Activated CD4-positive, alpha-beta memory T cell treated with anti-CD3 and anti-CD28 coated beads for 36 hours (primary cell): ENCODE measurements at regions of chr17 and their contacts with region 1.

Region 1: GRCh38 chr17:37643118-37643766 is at the start of gene DDX52:
- DNase-seq: peak; percentile 93
- H3K4me3 Mint-ChIP-seq: peak within 1 kb of the TSS; percentile 92
- H3K27ac Mint-ChIP-seq: peak within 1 kb of the TSS; percentile 78
- H3K4me1 Mint-ChIP-seq: peaks cover 23% of the 10 kb centered on the region
- H3K27me3 Mint-ChIP-seq: peaks cover 18% of the 10 kb centered on the region
- total RNA-seq, gene DDX52: 24.9 to 26.2 TPM

Region 2: GRCh38 chr17:37541880-37542660 is 101.2 kb before region 1 on chr17:
- CTCF ChIA-PET with region 1: no interaction called
- POLR2A ChIA-PET with region 1: no interaction called
- intact Hi-C with region 1: loop called (anchors 10 kb)
- DNase-seq: no peak
- H3K4me3 Mint-ChIP-seq: no peak overlapping the region
- H3K27ac Mint-ChIP-seq: peak overlapping the region; percentile 77
- H3K4me1 Mint-ChIP-seq: peaks cover 24% of the 10 kb centered on the region
- H3K27me3 Mint-ChIP-seq: no peaks in the 10 kb centered on the region

Region 3: GRCh38 chr17:37585066-37585465 is 58.2 kb before region 1 on chr17:
- CTCF ChIA-PET with region 1: no interaction called
- POLR2A ChIA-PET with region 1: no interaction called
- intact Hi-C with region 1: no loop called
- DNase-seq: no peak
- H3K4me3 Mint-ChIP-seq: no peak overlapping the region
- H3K27ac Mint-ChIP-seq: no peak overlapping the region
- H3K4me1 Mint-ChIP-seq: peaks cover 12% of the 10 kb centered on the region
- H3K27me3 Mint-ChIP-seq: no peaks in the 10 kb centered on the region

Region 4: GRCh38 chr17:37710344-37710886 is 67.2 kb after region 1 on chr17:
- CTCF ChIA-PET with region 1: no interaction called
- POLR2A ChIA-PET with region 1: no interaction called
- intact Hi-C with region 1: no loop called
- DNase-seq: peak; percentile 11
- H3K4me3 Mint-ChIP-seq: no peak overlapping the region
- H3K27ac Mint-ChIP-seq: no peak overlapping the region
- H3K4me1 Mint-ChIP-seq: no peaks in the 10 kb centered on the region
- H3K27me3 Mint-ChIP-seq: peaks cover 26% of the 10 kb centered on the region